ENCODE measurements at regions of chr11 and their contacts with region 1.

Region 1: GRCh38 chr11:108135845-108136544 is 14.6 kb downstream of the ACAT1 start:
- DNase-seq: peak; percentile 57
- H3K4me3 ChIP-seq: no peak overlapping the region
- H3K27ac ChIP-seq: no peak overlapping the region
- H3K4me1 ChIP-seq: peaks cover 4% of the 10 kb centered on the region
- CTCF ChIP-seq: peak; percentile 75

Region 2: DNA sequence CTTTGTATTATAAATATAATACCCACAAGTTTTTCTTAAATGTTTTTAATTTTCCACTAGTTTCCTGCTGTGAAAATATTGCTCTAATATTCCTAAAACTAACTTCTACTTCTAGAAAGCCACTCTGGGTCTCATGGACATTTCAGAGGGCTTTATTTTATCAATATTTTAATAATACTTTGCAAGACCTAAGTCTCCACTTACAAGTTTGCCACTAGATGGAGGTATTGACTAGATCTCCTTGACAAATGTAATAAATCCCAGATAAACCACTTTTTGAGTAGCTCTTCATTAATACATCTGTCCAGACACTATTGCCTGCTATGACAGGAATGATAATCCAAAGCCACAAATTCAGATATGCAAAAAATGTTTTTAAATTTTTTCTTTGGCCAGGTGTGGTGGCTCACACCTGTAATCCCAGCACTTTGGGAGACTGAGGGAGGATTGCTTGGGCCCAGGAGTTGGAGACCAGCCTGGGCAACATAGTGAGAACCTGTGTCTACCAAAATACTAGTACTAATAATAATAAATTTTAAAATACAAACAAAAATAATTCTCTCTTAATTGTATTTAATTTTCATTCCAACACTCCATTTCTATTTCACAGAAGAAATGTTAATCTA is 18.1 kb before region 1 on chr11:
- CTCF ChIA-PET with region 1: no interaction called
- POLR2A ChIA-PET with region 1: no interaction called
- intact Hi-C with region 1: no loop called
- DNase-seq: peak; percentile 74
- H3K4me3 ChIP-seq: no peak overlapping the region
- H3K27ac ChIP-seq: no peak overlapping the region
- H3K4me1 ChIP-seq: peaks cover 15% of the 10 kb centered on the region
- CTCF ChIP-seq: peak; percentile 90

Region 3: DNA sequence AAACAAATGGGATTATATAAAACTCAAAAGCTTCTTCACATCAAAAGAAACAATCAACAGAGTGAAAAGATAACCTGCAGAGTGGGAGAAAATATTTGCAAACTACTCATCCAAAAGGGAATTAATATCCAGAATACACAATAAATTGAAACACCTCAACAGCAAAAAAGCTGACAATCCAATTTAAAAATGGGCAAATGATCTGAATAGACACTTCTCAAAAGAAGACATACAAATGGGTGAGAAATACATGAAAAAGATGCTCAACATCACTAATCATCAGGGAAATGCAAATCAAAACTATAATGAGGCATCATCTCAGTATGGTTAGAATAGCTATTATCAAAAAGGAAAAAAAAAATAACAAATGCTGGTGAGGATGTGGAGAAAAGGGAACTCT is 444.0 kb after region 1 on chr11:
- CTCF ChIA-PET with region 1: no interaction called
- POLR2A ChIA-PET with region 1: interaction called, 12 read pairs
- intact Hi-C with region 1: no loop called
- DNase-seq: no peak
- H3K4me3 ChIP-seq: no peak overlapping the region
- H3K27ac ChIP-seq: no peak overlapping the region
- H3K4me1 ChIP-seq: no peaks in the 10 kb centered on the region
- CTCF ChIP-seq: no peak

Measured in OCI-LY7 (cell line).